Activated naive CD4-positive, alpha-beta T cell treated with anti-CD3 and anti-CD28 coated beads for 36 hours (primary cell): ENCODE measurements at regions of chr15 and their contacts with region 1.

Region 1: GRCh38 chr15:56765251-56765650 is 31.9 kb upstream of the ZNF280D start:
- DNase-seq: peak; percentile 19
- H3K4me3 Mint-ChIP-seq: no peak overlapping the region
- H3K27ac Mint-ChIP-seq: no peak overlapping the region
- H3K4me1 Mint-ChIP-seq: peaks cover 19% of the 10 kb centered on the region
- H3K27me3 Mint-ChIP-seq: peaks cover 3% of the 10 kb centered on the region

Region 2: DNA sequence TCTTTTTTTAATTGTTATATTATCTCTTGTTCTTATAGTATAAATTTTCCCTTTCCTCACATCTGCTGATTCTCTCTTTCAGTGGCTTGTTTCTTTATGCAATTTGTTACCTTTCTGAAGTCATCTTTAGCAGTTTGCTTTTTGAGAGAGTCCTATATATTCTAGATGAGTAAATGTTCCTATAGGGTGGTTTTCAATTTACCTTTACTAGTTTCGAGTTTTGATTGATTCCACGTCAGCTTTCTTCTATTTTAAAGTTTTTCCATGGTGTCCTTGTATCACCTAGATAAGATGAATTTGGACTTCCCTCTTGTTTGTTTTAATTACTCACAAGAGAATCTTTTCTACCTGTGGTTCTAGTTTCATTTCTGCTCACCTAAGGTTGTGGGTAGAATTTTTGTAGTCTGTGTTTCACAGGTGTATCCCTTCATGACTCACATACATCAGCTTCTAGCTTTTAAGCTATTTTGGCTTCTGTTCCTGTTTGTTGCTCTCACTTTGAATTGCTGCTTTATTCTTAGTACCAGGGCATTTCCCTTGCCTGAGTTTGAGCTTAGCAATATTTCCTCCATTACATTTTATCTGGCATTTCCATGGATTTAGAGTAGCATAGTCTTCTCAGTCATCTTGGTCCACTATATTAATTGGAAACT is 393.6 kb before region 1 on chr15:
- CTCF ChIA-PET with region 1: no interaction called
- intact Hi-C with region 1: loop called (anchors 10 kb)
- DNase-seq: no peak
- H3K4me3 Mint-ChIP-seq: no peak overlapping the region
- H3K27ac Mint-ChIP-seq: no peak overlapping the region
- H3K4me1 Mint-ChIP-seq: peaks cover 9% of the 10 kb centered on the region
- H3K27me3 Mint-ChIP-seq: peaks cover 28% of the 10 kb centered on the region

Region 3: GRCh38 chr15:56537881-56538280 is 227.4 kb before region 1 on chr15:
- CTCF ChIA-PET with region 1: no interaction called
- intact Hi-C with region 1: no loop called
- DNase-seq: peak; percentile 49
- H3K4me3 Mint-ChIP-seq: no peak overlapping the region
- H3K27ac Mint-ChIP-seq: no peak overlapping the region
- H3K4me1 Mint-ChIP-seq: peaks cover 3% of the 10 kb centered on the region
- H3K27me3 Mint-ChIP-seq: no peaks in the 10 kb centered on the region

Region 4: GRCh38 chr15:56786966-56787365 is 21.7 kb after region 1 on chr15:
- CTCF ChIA-PET with region 1: no interaction called
- intact Hi-C with region 1: loop called (anchors 1 kb)
- DNase-seq: no peak
- H3K4me3 Mint-ChIP-seq: no peak overlapping the region
- H3K27ac Mint-ChIP-seq: no peak overlapping the region
- H3K4me1 Mint-ChIP-seq: peaks cover 11% of the 10 kb centered on the region
- H3K27me3 Mint-ChIP-seq: peaks cover 6% of the 10 kb centered on the region

Region 5: GRCh38 chr15:56984681-56985481 is 219.6 kb after region 1 on chr15:
- CTCF ChIA-PET with region 1: no interaction called
- intact Hi-C with region 1: loop called (anchors 10 kb)
- DNase-seq: no peak
- H3K4me3 Mint-ChIP-seq: no peak overlapping the region
- H3K27ac Mint-ChIP-seq: no peak overlapping the region
- H3K4me1 Mint-ChIP-seq: peaks cover 59% of the 10 kb centered on the region
- H3K27me3 Mint-ChIP-seq: no peaks in the 10 kb centered on the region